ENCODE measurements at regions of chr22 and their contacts with region 1.

Region 1: GRCh38 chr22:24803011-24803542 is 2.9 kb upstream of the SGSM1 start:
- DNase-seq: peak; percentile 53 to 61
- ATAC-seq: peak; percentile 63 to 76
- H3K4me3 ChIP-seq: no peak overlapping the region
- H3K27ac ChIP-seq: no peak overlapping the region
- H3K4me1 ChIP-seq: no peaks in the 10 kb centered on the region
- CTCF ChIP-seq: peak; percentile 71
- EP300 ChIP-seq: no peak
- POLR2A ChIP-seq: no peak
- RAD21 ChIP-seq: peak; percentile 21 to 24; a peak in 2 of 5 replicates

Region 2: DNA sequence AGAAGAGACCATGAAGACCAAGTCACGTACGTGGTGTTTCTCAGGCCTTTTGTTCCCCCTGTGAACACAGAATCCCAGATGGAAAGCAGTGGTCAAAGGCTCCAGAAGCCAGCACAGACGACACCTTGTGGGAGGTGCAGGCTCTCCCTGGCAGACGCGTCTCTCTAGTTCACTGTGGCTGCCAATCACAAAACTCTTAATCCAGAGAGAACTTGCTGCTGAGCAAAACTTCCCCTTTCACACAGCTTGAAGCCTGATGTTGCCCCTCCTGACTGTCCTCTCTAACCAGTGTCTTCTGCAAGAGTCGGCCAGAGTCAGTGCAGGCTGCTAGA is 95.6 kb before region 1 on chr22:
- CTCF ChIA-PET with region 1: no interaction called
- POLR2A ChIA-PET with region 1: no interaction called
- DNase-seq: peak in 1 of 2 experiments; percentile 11
- ATAC-seq: peak; percentile 81 to 94; a peak in 5 of 6 replicates
- H3K4me3 ChIP-seq: no peak overlapping the region
- H3K27ac ChIP-seq: no peak overlapping the region
- H3K4me1 ChIP-seq: no peaks in the 10 kb centered on the region
- CTCF ChIP-seq: no peak
- EP300 ChIP-seq: no peak
- POLR2A ChIP-seq: no peak
- RAD21 ChIP-seq: no peak

Region 3: GRCh38 chr22:24751518-24751917 is 51.6 kb before region 1 on chr22:
- CTCF ChIA-PET with region 1: no interaction called
- POLR2A ChIA-PET with region 1: no interaction called
- DNase-seq: no peak
- ATAC-seq: no peak
- H3K4me3 ChIP-seq: no peak overlapping the region
- H3K27ac ChIP-seq: no peak overlapping the region
- H3K4me1 ChIP-seq: no peaks in the 10 kb centered on the region
- CTCF ChIP-seq: no peak
- EP300 ChIP-seq: no peak
- POLR2A ChIP-seq: no peak
- RAD21 ChIP-seq: no peak

Region 4: GRCh38 chr22:24789516-24789915 is 13.6 kb before region 1 on chr22:
- CTCF ChIA-PET with region 1: interaction called, 17 read pairs
- POLR2A ChIA-PET with region 1: interaction called, 4 read pairs
- DNase-seq: no peak
- ATAC-seq: no peak
- H3K4me3 ChIP-seq: no peak overlapping the region
- H3K27ac ChIP-seq: no peak overlapping the region
- H3K4me1 ChIP-seq: no peaks in the 10 kb centered on the region
- CTCF ChIP-seq: no peak
- EP300 ChIP-seq: no peak
- POLR2A ChIP-seq: no peak
- RAD21 ChIP-seq: no peak

Region 5: DNA sequence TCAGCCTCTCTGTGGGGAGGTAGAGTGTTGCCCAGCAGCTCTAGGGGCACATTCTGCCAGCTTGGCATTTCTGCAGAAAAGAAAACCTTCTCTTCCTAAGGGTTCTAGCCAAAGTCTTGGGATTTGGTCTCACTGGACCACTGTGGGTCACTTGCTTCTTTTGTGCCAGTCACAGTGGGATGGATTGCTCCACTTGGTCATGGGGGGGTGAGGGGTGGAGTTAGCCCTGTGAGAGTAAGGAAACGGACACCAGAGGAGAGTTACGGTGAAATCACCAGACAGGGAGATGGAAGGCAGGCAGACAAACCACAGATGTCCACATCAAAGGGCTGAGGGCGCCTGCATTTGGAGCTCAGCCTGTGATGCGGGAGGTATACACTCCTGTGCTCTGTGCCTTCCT is 13.7 kb after region 1 on chr22:
- CTCF ChIA-PET with region 1: interaction called, 13 read pairs
- POLR2A ChIA-PET with region 1: no interaction called
- DNase-seq: no peak
- ATAC-seq: no peak
- H3K4me3 ChIP-seq: no peak overlapping the region
- H3K27ac ChIP-seq: no peak overlapping the region
- H3K4me1 ChIP-seq: peaks cover 15% of the 10 kb centered on the region
- CTCF ChIP-seq: no peak
- EP300 ChIP-seq: no peak
- POLR2A ChIP-seq: no peak
- RAD21 ChIP-seq: no peak

Region 6: DNA sequence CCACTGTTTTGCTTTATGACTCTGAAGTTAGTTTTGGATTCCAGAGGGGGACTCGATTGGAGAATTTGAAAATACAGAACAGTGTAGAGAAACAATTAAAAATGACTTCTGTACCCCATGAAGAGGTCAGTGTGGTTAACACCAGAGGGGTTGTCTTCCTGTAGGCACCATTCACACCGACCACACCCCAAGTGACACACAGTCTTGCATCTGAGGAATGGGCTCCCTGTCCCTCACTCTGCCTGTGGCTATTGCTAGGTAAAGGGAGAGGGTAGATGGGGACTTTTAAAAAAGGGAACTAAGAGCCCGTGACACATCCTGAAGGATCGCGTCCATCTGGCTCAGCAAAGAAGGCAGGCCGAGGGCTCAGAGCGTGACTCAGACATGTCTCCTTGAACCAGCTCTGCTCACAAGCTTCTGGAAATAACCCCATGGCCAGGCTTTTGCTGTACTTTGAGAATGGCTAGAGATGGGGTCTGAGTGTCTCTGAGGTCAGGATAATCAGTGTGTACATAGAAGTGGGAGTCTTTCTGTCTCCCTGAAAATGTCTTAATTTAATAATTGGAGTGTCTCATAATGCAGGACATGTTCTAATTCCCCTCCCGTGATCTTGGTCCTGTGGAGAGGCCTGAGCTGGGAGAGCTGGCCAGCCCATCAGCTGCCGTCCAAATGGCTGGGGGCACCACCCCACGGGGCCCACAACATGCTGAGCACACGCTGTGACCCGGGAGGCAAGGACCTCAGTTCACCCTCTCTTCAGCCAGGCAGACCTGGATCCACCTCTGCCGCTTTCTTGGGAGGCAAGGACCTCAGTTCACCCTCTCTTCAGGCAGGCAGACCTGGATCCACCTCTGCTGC is 42.2 kb after region 1 on chr22:
- CTCF ChIA-PET with region 1: interaction called, 10 read pairs
- POLR2A ChIA-PET with region 1: no interaction called
- DNase-seq: peak in 1 of 2 experiments; percentile 20
- ATAC-seq: peak; percentile 68 to 80; a peak in 5 of 6 replicates
- H3K4me3 ChIP-seq: no peak overlapping the region
- H3K27ac ChIP-seq: peak overlapping the region in 1 of 2 experiments; percentile 36; a peak in 1 of 6 replicates
- H3K4me1 ChIP-seq: peaks cover 8% of the 10 kb centered on the region; the same call in 1 of the 3 replicates
- CTCF ChIP-seq: no peak
- EP300 ChIP-seq: no peak
- POLR2A ChIP-seq: no peak
- RAD21 ChIP-seq: no peak

Region 7: GRCh38 chr22:24901462-24901861 is 98.4 kb after region 1 on chr22:
- CTCF ChIA-PET with region 1: no interaction called
- POLR2A ChIA-PET with region 1: no interaction called
- DNase-seq: no peak
- ATAC-seq: no peak
- H3K4me3 ChIP-seq: no peak overlapping the region
- H3K27ac ChIP-seq: no peak overlapping the region
- H3K4me1 ChIP-seq: peaks cover 2% of the 10 kb centered on the region; the same call in 2 of the 3 replicates
- CTCF ChIP-seq: no peak
- EP300 ChIP-seq: no peak
- POLR2A ChIP-seq: no peak
- RAD21 ChIP-seq: no peak